Naive thymus-derived CD4-positive, alpha-beta T cell (primary cell): ENCODE measurements at regions of chr19 and their contacts with region 1.

Region 1: GRCh38 chr19:30682999-30683536 is 310.9 kb downstream of the ZNF536 start:
- DNase-seq: peak in 8 of 9 donors; percentile 18 to 51 (median 26)
- ATAC-seq: peak; percentile 66
- H3K4me3 ChIP-seq: no peak overlapping the region
- H3K4me3 Mint-ChIP-seq: no peak overlapping the region
- H3K27ac ChIP-seq: no peak overlapping the region
- H3K27ac Mint-ChIP-seq: no peak overlapping the region
- H3K4me1 ChIP-seq: no peaks in the 10 kb centered on the region
- H3K4me1 Mint-ChIP-seq: no peaks in the 10 kb centered on the region
- H3K27me3 ChIP-seq: no peaks in the 10 kb centered on the region
- H3K27me3 Mint-ChIP-seq: peaks cover 12 to 65% (median 43%) of the 10 kb centered on the region in 5 donors

Region 2: DNA sequence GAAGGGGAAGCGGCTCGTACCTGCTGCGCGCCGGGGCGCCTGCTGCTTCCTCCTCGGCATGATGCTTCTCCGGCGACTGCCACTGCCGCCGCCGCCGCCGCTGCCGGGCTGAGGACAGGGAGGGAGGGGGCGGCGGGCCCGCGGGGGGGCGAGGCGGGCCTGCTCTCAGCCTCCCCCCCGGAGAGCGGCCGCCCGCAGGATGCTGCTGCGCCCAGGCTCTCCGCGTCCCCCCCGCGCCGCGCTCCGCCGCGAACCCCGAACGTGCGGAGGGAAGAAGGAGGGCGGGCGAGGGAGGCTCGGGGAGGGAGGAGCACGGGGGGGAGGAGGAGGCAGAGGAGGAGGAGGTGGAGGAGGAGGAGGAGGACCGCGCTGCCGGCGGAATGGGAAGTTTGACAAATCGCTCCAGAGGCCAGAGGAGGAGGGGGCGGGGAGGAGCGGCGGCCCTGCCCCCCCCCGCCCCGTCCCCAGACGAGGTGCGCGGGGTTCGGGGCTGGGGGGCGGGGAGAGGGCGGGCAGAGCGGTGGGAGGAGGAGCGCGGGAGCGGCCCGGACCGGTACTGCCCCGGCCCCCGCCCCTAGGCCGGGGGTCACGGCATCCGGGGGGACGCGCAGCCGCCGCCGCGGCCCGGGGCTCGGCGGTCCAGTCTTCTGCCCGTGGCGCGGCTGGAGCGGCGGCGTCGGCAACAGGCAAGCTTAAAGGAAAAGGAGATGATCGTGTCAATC is 666.3 kb after region 1 on chr19 and contains the start of gene TSHZ3:
- CTCF ChIA-PET with region 1: no interaction called
- POLR2A ChIA-PET with region 1: no interaction called
- intact Hi-C with region 1: loop called in 1 of 2 experiments (anchors 5 kb)
- DNase-seq: peak in 6 of 9 donors; percentile 32 to 66 (median 46)
- ATAC-seq: peak; percentile 66
- H3K4me3 ChIP-seq: peak within 1 kb of the TSS; percentile 57
- H3K4me3 Mint-ChIP-seq: peak within 1 kb of the TSS; percentile 71 to 93 (median 84)
- H3K27ac ChIP-seq: no peak within 1 kb of the TSS
- H3K27ac Mint-ChIP-seq: peak within 1 kb of the TSS in 1 of 9 donors; percentile 23
- H3K4me1 ChIP-seq: peaks cover 19 to 22% of the 10 kb centered on the region in 2 donors
- H3K4me1 Mint-ChIP-seq: peaks cover 28 to 40% (median 35%) of the 10 kb centered on the region in 7 donors
- H3K27me3 ChIP-seq: peaks cover 30 to 36% of the 10 kb centered on the region in 2 donors
- H3K27me3 Mint-ChIP-seq: peaks cover 51 to 75% (median 61%) of the 10 kb centered on the region in 5 donors
- total RNA-seq, gene TSHZ3: 0.08 to 6.0 (median 0.19) TPM

Region 3: GRCh38 chr19:32041681-32042292 is 1358.7 kb after region 1 on chr19:
- CTCF ChIA-PET with region 1: interaction called, 3 read pairs
- POLR2A ChIA-PET with region 1: no interaction called
- intact Hi-C with region 1: loop called (anchors 5 to 10 kb)
- DNase-seq: no peak
- ATAC-seq: no peak
- H3K4me3 ChIP-seq: peak overlapping the region; percentile 13
- H3K4me3 Mint-ChIP-seq: peak overlapping the region in 4 of 10 donors; percentile 2 to 46 (median 25)
- H3K27ac ChIP-seq: no peak overlapping the region
- H3K27ac Mint-ChIP-seq: no peak overlapping the region
- H3K4me1 ChIP-seq: peaks cover 0 to 3% of the 10 kb centered on the region in 2 donors
- H3K4me1 Mint-ChIP-seq: peaks cover 0 to 8% (median 5%) of the 10 kb centered on the region in 7 donors
- H3K27me3 ChIP-seq: peaks cover 0 to 10% of the 10 kb centered on the region in 2 donors
- H3K27me3 Mint-ChIP-seq: peaks cover 16 to 72% (median 50%) of the 10 kb centered on the region in 5 donors